CD8-positive, alpha-beta T cell (primary cell): ENCODE measurements at regions of chr1 and their contacts with region 1.

Region 1: GRCh38 chr1:6199298-6200187 is at the start of gene RPL22:
- DNase-seq: peak; percentile 93 to 99 (median 97)
- ATAC-seq: peak; percentile 97
- H3K4me3 ChIP-seq: peak within 1 kb of the TSS; percentile 83 to 97
- H3K4me3 Mint-ChIP-seq: peak within 1 kb of the TSS; percentile 84
- H3K27ac ChIP-seq: peak within 1 kb of the TSS; percentile 68 to 82
- H3K27ac Mint-ChIP-seq: peak within 1 kb of the TSS; percentile 92
- H3K4me1 ChIP-seq: peaks cover 24% of the 10 kb centered on the region
- H3K4me1 Mint-ChIP-seq: peaks cover 42% of the 10 kb centered on the region
- H3K27me3 ChIP-seq: no peaks in the 10 kb centered on the region
- H3K27me3 Mint-ChIP-seq: no peaks in the 10 kb centered on the region
- CTCF ChIP-seq: no peak
- total RNA-seq, gene RPL22: 565 to 567 TPM

Region 2: DNA sequence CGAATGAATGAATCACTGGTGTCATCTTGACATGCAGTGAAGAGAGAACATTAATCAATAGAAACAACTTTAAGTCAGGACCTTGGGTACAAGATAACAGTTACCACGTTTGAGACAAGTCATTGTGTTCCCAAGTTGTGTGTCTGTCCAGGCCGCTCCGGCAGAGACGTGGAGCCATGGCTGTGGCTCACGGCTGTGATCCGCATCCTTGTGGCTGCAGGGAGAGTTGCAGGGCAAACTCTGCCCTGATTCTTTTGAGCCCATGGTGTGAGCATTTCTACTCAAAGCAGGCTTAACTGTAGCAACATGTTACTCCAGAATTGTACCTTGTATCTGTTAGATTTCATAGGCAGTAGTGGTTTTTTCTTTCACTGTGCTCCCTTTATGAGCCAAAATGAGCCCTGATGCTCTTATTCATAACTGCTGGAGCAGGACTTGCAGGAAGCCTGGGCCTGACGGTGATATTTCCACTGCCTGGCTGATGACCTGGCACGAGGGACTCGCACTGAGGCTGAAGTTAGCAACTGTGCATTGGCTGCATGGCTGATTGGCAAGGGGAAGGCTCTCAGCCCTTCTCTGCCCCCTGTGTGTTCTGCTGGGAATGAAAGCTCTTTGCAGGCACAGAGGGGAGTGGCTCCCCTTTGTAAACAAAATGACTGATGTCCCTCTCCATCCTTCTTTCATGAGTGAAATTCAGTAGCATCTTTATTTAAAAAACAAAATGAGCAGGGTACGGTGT is 1079.9 kb before region 1 on chr1:
- CTCF ChIA-PET with region 1: no interaction called
- POLR2A ChIA-PET with region 1: no interaction called
- intact Hi-C with region 1: no loop called
- DNase-seq: no peak
- ATAC-seq: no peak
- H3K4me3 ChIP-seq: no peak overlapping the region
- H3K4me3 Mint-ChIP-seq: no peak overlapping the region
- H3K27ac ChIP-seq: no peak overlapping the region
- H3K27ac Mint-ChIP-seq: no peak overlapping the region
- H3K4me1 ChIP-seq: no peaks in the 10 kb centered on the region
- H3K4me1 Mint-ChIP-seq: no peaks in the 10 kb centered on the region
- H3K27me3 ChIP-seq: no peaks in the 10 kb centered on the region
- H3K27me3 Mint-ChIP-seq: no peaks in the 10 kb centered on the region
- CTCF ChIP-seq: no peak

Region 3: DNA sequence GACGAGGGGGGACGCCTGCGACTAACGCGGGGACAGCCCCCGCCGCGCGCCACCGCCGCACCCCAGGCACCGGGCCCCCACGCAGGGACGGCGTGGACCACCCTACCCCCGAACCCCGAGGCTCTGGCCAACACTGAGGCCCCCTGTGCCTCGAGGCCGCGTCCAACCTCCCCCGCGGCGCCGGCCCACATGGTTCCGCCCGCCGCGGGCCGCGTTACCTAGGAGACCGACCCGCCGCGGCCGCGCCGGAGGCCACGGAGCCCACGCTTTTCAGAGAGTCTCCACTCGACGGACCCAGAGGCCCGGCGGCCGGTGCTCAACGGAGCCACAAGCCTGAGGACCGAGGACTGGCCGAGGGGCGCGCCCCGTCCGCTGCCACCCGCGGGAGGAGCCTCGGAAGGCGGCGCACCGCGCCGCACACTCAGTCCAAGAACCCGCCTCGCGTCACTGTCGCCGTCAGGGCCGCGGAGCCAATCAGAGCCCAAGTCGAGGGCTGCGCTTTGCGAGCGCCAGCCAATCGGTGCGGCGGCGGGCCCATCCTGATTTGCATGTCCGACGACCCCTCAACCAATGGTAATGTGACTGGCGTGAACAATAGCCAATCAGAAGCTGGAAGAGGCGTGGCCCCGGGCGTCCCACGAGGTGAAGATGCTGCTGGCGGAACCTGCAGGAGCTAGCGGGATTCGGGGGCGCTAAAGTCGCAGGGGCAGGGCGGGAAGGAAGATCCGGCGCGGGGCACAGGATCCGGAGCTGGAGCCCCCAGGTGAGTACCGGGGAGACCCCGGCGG is 207.3 kb before region 1 on chr1 and contains the start of gene NPHP4:
- CTCF ChIA-PET with region 1: no interaction called
- POLR2A ChIA-PET with region 1: no interaction called
- intact Hi-C with region 1: loop called in 1 of 2 experiments (anchors 1 kb)
- DNase-seq: peak; percentile 98 to 100 (median 99)
- ATAC-seq: peak; percentile 86
- H3K4me3 ChIP-seq: peak within 1 kb of the TSS; percentile 64 to 87
- H3K4me3 Mint-ChIP-seq: peak within 1 kb of the TSS; percentile 96
- H3K27ac ChIP-seq: peak within 1 kb of the TSS; percentile 90 to 99
- H3K27ac Mint-ChIP-seq: peak within 1 kb of the TSS; percentile 93
- H3K4me1 ChIP-seq: peaks cover 35% of the 10 kb centered on the region
- H3K4me1 Mint-ChIP-seq: peaks cover 33% of the 10 kb centered on the region
- H3K27me3 ChIP-seq: no peaks in the 10 kb centered on the region
- H3K27me3 Mint-ChIP-seq: no peaks in the 10 kb centered on the region
- CTCF ChIP-seq: no peak
- total RNA-seq, gene NPHP4: 3.1 to 3.7 TPM

Region 4: GRCh38 chr1:6235296-6235677 is 35.7 kb after region 1 on chr1:
- CTCF ChIA-PET with region 1: no interaction called
- POLR2A ChIA-PET with region 1: interaction called, 3 read pairs
- intact Hi-C with region 1: loop called (anchors 1 kb)
- DNase-seq: peak in 3 of 9 experiments; percentile 15 to 38 (median 17)
- ATAC-seq: peak; percentile 16
- H3K4me3 ChIP-seq: peak overlapping the region; percentile 62 to 63
- H3K4me3 Mint-ChIP-seq: peak overlapping the region; percentile 88
- H3K27ac ChIP-seq: peak overlapping the region in 1 of 2 experiments; percentile 21
- H3K27ac Mint-ChIP-seq: peak overlapping the region; percentile 45
- H3K4me1 ChIP-seq: peaks cover 12% of the 10 kb centered on the region
- H3K4me1 Mint-ChIP-seq: peaks cover 16% of the 10 kb centered on the region
- H3K27me3 ChIP-seq: peaks cover 4% of the 10 kb centered on the region in 2 experiments
- H3K27me3 Mint-ChIP-seq: peaks cover 10% of the 10 kb centered on the region
- CTCF ChIP-seq: no peak

Region 5: DNA sequence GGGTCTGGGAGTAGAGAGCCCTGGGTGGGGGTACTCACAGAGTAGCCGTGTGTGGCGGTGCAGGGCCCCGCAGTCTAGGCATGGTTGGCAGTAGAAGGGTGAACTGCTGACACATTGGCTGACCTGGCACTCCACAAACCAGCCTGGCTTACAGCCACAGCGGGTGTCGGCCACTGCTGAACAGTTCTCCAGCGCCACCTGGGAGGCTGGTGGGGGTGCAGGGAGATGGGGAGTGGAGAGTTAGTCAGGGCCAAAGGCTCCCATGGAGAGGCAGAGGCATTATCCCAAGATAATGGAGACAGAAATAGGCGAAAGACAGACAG is 264.9 kb after region 1 on chr1:
- CTCF ChIA-PET with region 1: no interaction called
- POLR2A ChIA-PET with region 1: no interaction called
- intact Hi-C with region 1: loop called in 1 of 2 experiments (anchors 1 kb)
- DNase-seq: peak in 2 of 9 experiments; percentile 38 to 44
- ATAC-seq: no peak
- H3K4me3 ChIP-seq: peak overlapping the region; percentile 88 to 95
- H3K4me3 Mint-ChIP-seq: peak overlapping the region; percentile 91
- H3K27ac ChIP-seq: peak overlapping the region; percentile 72 to 87
- H3K27ac Mint-ChIP-seq: peak overlapping the region; percentile 95
- H3K4me1 ChIP-seq: peaks cover 52% of the 10 kb centered on the region
- H3K4me1 Mint-ChIP-seq: peaks cover 44% of the 10 kb centered on the region
- H3K27me3 ChIP-seq: no peaks in the 10 kb centered on the region
- H3K27me3 Mint-ChIP-seq: no peaks in the 10 kb centered on the region
- CTCF ChIP-seq: no peak

Region 6: GRCh38 chr1:6502000-6502891 is 302.7 kb after region 1 on chr1:
- CTCF ChIA-PET with region 1: no interaction called
- POLR2A ChIA-PET with region 1: no interaction called
- intact Hi-C with region 1: no loop called
- DNase-seq: no peak
- ATAC-seq: no peak
- H3K4me3 ChIP-seq: no peak overlapping the region
- H3K4me3 Mint-ChIP-seq: no peak overlapping the region
- H3K27ac ChIP-seq: no peak overlapping the region
- H3K27ac Mint-ChIP-seq: no peak overlapping the region
- H3K4me1 ChIP-seq: peaks cover 7% of the 10 kb centered on the region
- H3K4me1 Mint-ChIP-seq: peaks cover 8% of the 10 kb centered on the region
- H3K27me3 ChIP-seq: peaks cover 0 to 4% of the 10 kb centered on the region in 2 experiments
- H3K27me3 Mint-ChIP-seq: peaks cover 9% of the 10 kb centered on the region
- CTCF ChIP-seq: no peak

Region 7: GRCh38 chr1:6701437-6702153 is 502.1 kb after region 1 on chr1 and contains the start of gene DNAJC11:
- CTCF ChIA-PET with region 1: no interaction called
- POLR2A ChIA-PET with region 1: no interaction called
- intact Hi-C with region 1: loop called in 1 of 2 experiments (anchors 2 kb)
- DNase-seq: peak; percentile 82 to 96 (median 89)
- ATAC-seq: peak; percentile 96
- H3K4me3 ChIP-seq: peak within 1 kb of the TSS; percentile 79 to 87
- H3K4me3 Mint-ChIP-seq: peak within 1 kb of the TSS; percentile 94
- H3K27ac ChIP-seq: peak within 1 kb of the TSS; percentile 68 to 70
- H3K27ac Mint-ChIP-seq: peak within 1 kb of the TSS; percentile 95
- H3K4me1 ChIP-seq: peaks cover 11% of the 10 kb centered on the region
- H3K4me1 Mint-ChIP-seq: peaks cover 25% of the 10 kb centered on the region
- H3K27me3 ChIP-seq: no peaks in the 10 kb centered on the region
- H3K27me3 Mint-ChIP-seq: no peaks in the 10 kb centered on the region
- CTCF ChIP-seq: peak; percentile 89
- total RNA-seq, gene DNAJC11: 23.3 to 24.4 TPM